Activated T-helper 1 cell treated with anti-CD3 and anti-CD28 coated beads, Interleukin-12 subunit alpha, Interleukin-12 subunit beta, Interleukin-2, Interleukin-4 antibody, amounts not matched to agents 30 ng/mL and 10 ng/mL and 1 ng/mL, durations not matched to agents 14 hours and 24 hours and 36 hours (primary cell): ENCODE measurements at regions of chr13 and their contacts with region 1.

Region 1: GRCh38 chr13:110715395-110716235 is 2.1 kb downstream of the ING1 start:
- DNase-seq: peak; percentile 95
- H3K4me3 Mint-ChIP-seq: peak overlapping the region; percentile 98
- H3K27ac Mint-ChIP-seq: peak overlapping the region; percentile 98
- H3K4me1 Mint-ChIP-seq: peaks cover 27% of the 10 kb centered on the region
- H3K27me3 Mint-ChIP-seq: no peaks in the 10 kb centered on the region

Region 2: DNA sequence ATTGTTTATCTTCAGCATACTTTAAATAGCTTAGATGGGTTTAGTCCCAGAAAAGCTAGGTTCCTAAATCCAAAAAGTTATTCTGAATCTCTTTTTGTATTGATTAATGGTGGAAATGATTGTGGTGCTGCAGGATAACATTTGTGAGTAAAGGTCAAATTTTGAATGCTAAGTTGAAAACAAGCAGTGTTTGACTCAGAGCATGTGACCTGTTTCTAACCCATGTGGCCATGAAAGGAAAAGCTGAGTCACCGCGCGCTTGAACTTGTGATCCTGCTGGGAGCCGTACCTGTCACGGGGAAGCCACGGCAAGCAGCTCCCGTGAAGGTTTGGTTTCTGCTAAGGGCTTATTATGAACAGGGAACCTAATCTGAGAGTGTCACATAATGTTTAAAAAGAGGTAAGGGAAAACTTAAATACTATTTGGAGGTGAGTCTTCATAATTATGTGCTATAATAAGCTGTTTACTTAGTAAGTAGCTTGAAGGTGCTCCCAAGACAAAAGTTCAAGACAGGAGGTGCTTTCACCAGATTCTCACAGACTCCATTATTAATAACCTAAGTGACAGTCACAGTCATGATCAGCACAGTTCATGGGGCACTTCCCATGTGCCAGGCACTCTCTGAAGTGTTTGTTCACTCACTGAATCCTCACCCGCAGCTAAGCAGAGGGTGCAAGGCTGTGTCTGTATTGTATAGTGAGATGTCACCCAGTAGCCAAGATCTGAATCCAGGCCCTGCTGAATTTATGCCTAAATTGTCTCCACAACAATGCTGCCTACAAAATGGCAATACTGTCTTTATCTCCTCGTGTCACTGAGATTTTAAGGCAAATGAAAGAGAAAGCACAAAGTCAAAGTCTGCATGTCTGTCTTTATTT is 1799.7 kb before region 1 on chr13:
- intact Hi-C with region 1: loop called (anchors 10 kb)
- DNase-seq: peak; percentile 72
- H3K4me3 Mint-ChIP-seq: peak overlapping the region; percentile 80
- H3K27ac Mint-ChIP-seq: peak overlapping the region; percentile 97
- H3K4me1 Mint-ChIP-seq: peaks cover 30% of the 10 kb centered on the region
- H3K27me3 Mint-ChIP-seq: peaks cover 2% of the 10 kb centered on the region

Region 3: GRCh38 chr13:110561344-110562035 is 154.1 kb before region 1 on chr13 and contains the start of gene RAB20:
- intact Hi-C with region 1: loop called (anchors 5 kb)
- DNase-seq: peak; percentile 62
- H3K4me3 Mint-ChIP-seq: peak within 1 kb of the TSS; percentile 97
- H3K27ac Mint-ChIP-seq: peak within 1 kb of the TSS; percentile 93
- H3K4me1 Mint-ChIP-seq: peaks cover 41% of the 10 kb centered on the region
- H3K27me3 Mint-ChIP-seq: peaks cover 31% of the 10 kb centered on the region
- total RNA-seq, gene RAB20: 1.1 and 1.5 TPM in 2 replicates

Region 4: GRCh38 chr13:110726726-110727125 is 11.1 kb after region 1 on chr13:
- intact Hi-C with region 1: loop called (anchors 1 kb)
- DNase-seq: peak; percentile 43
- H3K4me3 Mint-ChIP-seq: peak overlapping the region; percentile 20
- H3K27ac Mint-ChIP-seq: peak overlapping the region; percentile 5
- H3K4me1 Mint-ChIP-seq: peaks cover 20% of the 10 kb centered on the region
- H3K27me3 Mint-ChIP-seq: peaks cover 10% of the 10 kb centered on the region

Region 5: GRCh38 chr13:110756219-110756631 is 40.6 kb after region 1 on chr13:
- intact Hi-C with region 1: no loop called
- DNase-seq: no peak
- H3K4me3 Mint-ChIP-seq: no peak overlapping the region
- H3K27ac Mint-ChIP-seq: no peak overlapping the region
- H3K4me1 Mint-ChIP-seq: no peaks in the 10 kb centered on the region
- H3K27me3 Mint-ChIP-seq: peaks cover 11% of the 10 kb centered on the region

Region 6: DNA sequence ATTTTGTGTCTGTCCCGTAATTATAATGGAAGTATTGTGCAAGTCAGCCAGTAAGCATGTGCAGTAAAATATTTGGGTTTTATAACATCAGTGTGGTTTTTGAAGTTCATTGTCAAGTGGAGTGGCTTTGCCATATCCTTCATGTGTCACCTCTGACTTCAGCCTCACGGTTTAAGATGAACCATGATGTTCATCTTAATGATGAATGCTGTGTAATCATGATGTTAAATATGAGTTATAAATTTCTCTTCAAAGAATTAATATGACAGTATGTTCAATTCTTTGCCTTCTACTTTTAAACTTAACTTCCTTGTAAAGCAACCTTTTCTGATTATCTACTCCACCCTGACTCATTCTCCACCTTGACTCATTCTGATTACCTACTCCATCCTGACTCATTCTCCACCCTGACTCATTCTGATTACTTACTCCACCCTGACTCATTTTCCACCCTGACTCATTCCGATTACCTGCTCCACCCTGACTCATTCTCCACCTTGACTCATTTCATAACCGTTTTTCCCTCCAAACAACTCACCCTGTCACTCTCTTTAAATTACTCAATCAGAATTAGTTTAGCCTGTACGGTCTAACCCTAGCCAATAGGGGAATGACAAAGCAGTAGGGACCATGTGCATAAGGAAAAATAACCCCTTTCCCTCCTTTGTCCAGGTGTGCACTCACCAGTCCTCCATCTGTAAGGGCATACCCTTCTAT is 249.6 kb after region 1 on chr13:
- intact Hi-C with region 1: loop called (anchors 2 kb)
- DNase-seq: peak; percentile 55
- H3K4me3 Mint-ChIP-seq: peak overlapping the region; percentile 32
- H3K27ac Mint-ChIP-seq: peak overlapping the region; percentile 95
- H3K4me1 Mint-ChIP-seq: peaks cover 54% of the 10 kb centered on the region
- H3K27me3 Mint-ChIP-seq: peaks cover 2% of the 10 kb centered on the region

Region 7: GRCh38 chr13:112587212-112587763 is 1871.7 kb after region 1 on chr13:
- intact Hi-C with region 1: loop called (anchors 5 kb)
- DNase-seq: peak; percentile 59
- H3K4me3 Mint-ChIP-seq: peak overlapping the region; percentile 96
- H3K27ac Mint-ChIP-seq: peak overlapping the region; percentile 93
- H3K4me1 Mint-ChIP-seq: peaks cover 36% of the 10 kb centered on the region
- H3K27me3 Mint-ChIP-seq: no peaks in the 10 kb centered on the region